BJ (cell line): ENCODE measurements at regions of chr10 and their contacts with region 1.

Region 1: GRCh38 chr10:80699602-80700039 is 161.9 kb downstream of the SH2D4B start:
- DNase-seq: no peak
- H3K4me3 ChIP-seq: no peak overlapping the region
- H3K27me3 ChIP-seq: no peaks in the 10 kb centered on the region
- CTCF ChIP-seq: peak; percentile 92

Region 2: GRCh38 chr10:80356563-80356988 is 343.0 kb before region 1 on chr10 and contains the starts of genes DYDC1 and DYDC2:
- CTCF ChIA-PET with region 1: no interaction called
- POLR2A ChIA-PET with region 1: no interaction called
- DNase-seq: no peak
- H3K4me3 ChIP-seq: no peak within 1 kb of the TSS
- H3K27me3 ChIP-seq: peaks cover 8% of the 10 kb centered on the region
- CTCF ChIP-seq: no peak
- polyA plus RNA-seq, gene DYDC1: not detected in 2 replicates
- polyA plus RNA-seq, gene DYDC2: not detected in 2 replicates

Region 3: DNA sequence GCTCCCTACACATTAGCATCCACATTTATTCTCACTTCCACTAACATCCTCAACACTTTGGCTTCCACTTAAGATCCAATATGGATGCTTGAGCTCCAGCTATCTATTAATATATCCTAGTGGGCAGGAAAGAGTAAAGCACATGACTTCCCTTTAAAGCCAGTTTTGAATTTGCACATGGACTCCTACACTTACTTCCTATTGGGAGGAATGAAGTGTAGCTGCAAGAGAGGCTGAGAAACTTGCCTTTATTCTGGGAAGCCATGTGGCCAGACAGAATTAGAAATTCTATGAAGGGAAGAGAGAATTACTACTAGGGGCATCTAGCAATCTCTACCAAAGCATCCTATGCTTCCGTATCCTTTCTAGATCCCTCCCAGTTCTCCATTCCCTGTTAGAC is 248.5 kb before region 1 on chr10:
- CTCF ChIA-PET with region 1: no interaction called
- POLR2A ChIA-PET with region 1: no interaction called
- DNase-seq: no peak
- H3K4me3 ChIP-seq: no peak overlapping the region
- H3K27me3 ChIP-seq: 0 out of 2 replicates have a peak, but pooled peaks cover 1% of the 10 kb centered on the region
- CTCF ChIP-seq: no peak

Region 4: GRCh38 chr10:80684259-80684658 is 15.4 kb before region 1 on chr10:
- CTCF ChIA-PET with region 1: interaction called, 10 read pairs
- POLR2A ChIA-PET with region 1: no interaction called
- DNase-seq: no peak
- H3K4me3 ChIP-seq: no peak overlapping the region
- H3K27me3 ChIP-seq: no peaks in the 10 kb centered on the region
- CTCF ChIP-seq: no peak

Region 5: GRCh38 chr10:80709866-80710265 is 10.2 kb after region 1 on chr10:
- CTCF ChIA-PET with region 1: interaction called, 12 read pairs
- POLR2A ChIA-PET with region 1: no interaction called
- DNase-seq: no peak
- H3K4me3 ChIP-seq: no peak overlapping the region
- H3K27me3 ChIP-seq: no peaks in the 10 kb centered on the region
- CTCF ChIP-seq: no peak